ENCODE measurements at regions of chr1 and their contacts with region 1.

Region 1: GRCh38 chr1:205919026-205919746 is 24.1 kb downstream of the SLC26A9 start:
- DNase-seq: peak; percentile 88
- ATAC-seq: peak; percentile 65

Region 2: DNA sequence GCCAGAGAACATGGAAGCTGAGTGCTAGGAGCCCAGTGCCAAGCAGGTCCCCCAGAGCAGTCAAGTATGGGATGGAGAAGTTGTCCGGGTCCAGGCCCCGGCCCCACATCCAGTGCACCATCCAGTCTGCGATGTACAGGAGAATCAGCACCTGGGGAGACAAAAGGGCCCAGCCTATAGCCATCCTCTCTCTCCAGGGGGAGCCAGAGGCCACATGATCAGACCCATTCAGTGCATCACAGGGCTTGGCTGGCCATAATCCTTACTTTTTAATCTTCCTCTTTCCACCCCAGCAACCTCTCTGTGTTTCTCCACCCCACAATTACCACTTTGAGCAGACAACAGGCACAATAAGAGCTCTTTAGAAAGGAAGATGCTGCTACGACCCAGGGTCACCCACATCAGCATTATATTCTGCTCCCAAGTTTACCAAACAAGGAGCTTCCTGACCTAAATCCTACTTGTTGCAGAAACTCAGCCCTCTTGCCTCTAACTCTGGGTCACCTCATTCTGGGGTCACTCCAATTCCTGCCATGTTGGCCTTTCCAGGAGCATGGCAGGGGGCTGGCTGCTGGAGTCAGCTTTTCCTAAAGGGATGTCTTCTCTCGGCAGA is 127.5 kb before region 1 on chr1:
- intact Hi-C with region 1: loop called (anchors 5 kb)
- DNase-seq: peak; percentile 64
- ATAC-seq: peak; percentile 59

Region 3: DNA sequence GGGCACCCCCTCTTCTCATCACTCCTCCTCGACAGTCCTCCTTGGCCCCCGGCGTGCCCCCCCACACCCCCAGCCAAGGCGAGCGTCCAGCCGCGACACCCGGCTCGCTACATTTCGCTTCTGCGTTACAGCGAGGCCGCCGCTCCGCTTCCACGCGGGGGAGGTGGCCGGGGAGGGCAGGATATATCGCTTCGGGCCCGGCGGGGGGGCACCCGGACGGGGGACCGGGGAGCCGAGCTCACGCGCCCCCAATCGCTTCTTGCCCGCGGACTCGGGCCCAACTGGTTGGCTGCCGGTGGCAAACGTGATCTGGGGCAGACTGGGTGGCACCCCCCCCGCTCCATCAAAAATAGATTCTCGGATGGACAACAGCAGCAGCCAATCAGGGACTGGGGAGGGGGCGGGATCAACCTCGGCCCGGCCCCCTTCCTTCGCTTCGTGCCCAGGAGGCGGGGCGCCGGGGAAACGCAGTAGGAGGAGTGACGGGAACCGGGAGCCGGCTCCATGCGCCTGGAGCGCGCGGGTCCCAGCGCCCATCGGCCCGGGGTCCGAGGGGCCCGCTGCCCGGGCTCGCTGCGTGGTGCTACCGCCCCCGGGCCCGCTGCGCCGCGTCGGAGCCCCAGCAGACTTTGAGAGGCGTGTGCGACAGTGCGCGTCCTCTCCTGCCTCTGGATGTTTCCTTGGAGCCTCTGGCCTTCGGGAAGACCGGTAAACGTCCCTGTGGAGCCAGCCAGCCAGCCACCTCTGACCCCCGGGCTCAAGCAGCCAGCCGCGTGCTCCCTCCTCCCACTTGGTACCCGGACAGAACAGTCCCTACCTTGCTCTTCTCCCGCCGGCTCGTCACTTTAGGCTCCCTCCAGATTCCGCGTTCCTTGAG is 106.1 kb before region 1 on chr1 and contains the start of gene SLC41A1:
- intact Hi-C with region 1: loop called (anchors 5 kb)
- DNase-seq: peak; percentile 94
- ATAC-seq: peak; percentile 92
- total RNA-seq, gene SLC41A1: 465 TPM

Measured in Right ventricle myocardium superior (tissue), 1 donor.